B cell (primary cell): ENCODE measurements at regions of chr4 and their contacts with region 1.

Region 1: GRCh38 chr4:169010125-169011023 is at the start of gene CBR4:
- DNase-seq: peak; percentile 99
- ATAC-seq: peak; percentile 96
- H3K4me3 ChIP-seq: peak within 1 kb of the TSS; percentile 94 to 100 (median 99)
- H3K4me3 Mint-ChIP-seq: peak within 1 kb of the TSS; percentile 91
- H3K27ac ChIP-seq: peak within 1 kb of the TSS; percentile 89 to 92
- H3K27ac Mint-ChIP-seq: peak within 1 kb of the TSS; percentile 99
- H3K4me1 ChIP-seq: peaks cover 16 to 18% of the 10 kb centered on the region in 2 donors
- H3K4me1 Mint-ChIP-seq: peaks cover 26% of the 10 kb centered on the region
- H3K27me3 ChIP-seq: no peaks in the 10 kb centered on the region
- H3K27me3 Mint-ChIP-seq: peaks cover 4% of the 10 kb centered on the region
- CTCF ChIP-seq: peak; percentile 41
- total RNA-seq, gene CBR4: 32.1 and 39.0 TPM in 2 replicates

Region 2: DNA sequence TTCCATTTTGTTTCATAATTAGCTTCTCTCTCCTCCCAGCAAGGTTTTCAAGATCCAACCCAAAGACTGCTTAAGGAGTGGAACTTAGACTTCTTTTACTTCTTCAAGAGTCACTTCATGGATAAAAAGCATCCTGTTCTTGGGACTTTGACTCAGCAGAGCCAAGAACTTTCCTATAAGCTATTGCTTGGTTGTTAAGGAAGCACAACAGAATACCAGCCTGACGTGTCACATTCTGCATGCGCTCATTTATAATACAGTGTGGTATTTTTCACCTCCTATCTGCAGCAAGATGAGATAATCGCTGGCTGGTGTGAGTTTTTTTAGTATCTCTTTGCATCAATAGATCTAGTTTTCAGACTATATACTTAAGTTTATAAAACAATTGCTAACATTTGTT is 361.4 kb before region 1 on chr4:
- CTCF ChIA-PET with region 1: no interaction called
- POLR2A ChIA-PET with region 1: no interaction called
- intact Hi-C with region 1: no loop called
- DNase-seq: no peak
- ATAC-seq: no peak
- H3K4me3 ChIP-seq: no peak overlapping the region
- H3K4me3 Mint-ChIP-seq: no peak overlapping the region
- H3K27ac ChIP-seq: no peak overlapping the region
- H3K27ac Mint-ChIP-seq: no peak overlapping the region
- H3K4me1 ChIP-seq: no peaks in the 10 kb centered on the region
- H3K4me1 Mint-ChIP-seq: no peaks in the 10 kb centered on the region
- H3K27me3 ChIP-seq: peaks cover 0 to 5% (median 0%) of the 10 kb centered on the region in 4 experiments
- H3K27me3 Mint-ChIP-seq: no peaks in the 10 kb centered on the region
- CTCF ChIP-seq: no peak

Region 3: GRCh38 chr4:168923526-168924194 is 86.7 kb before region 1 on chr4:
- CTCF ChIA-PET with region 1: interaction called, 3 read pairs
- POLR2A ChIA-PET with region 1: no interaction called
- intact Hi-C with region 1: loop called (anchors 1 kb)
- DNase-seq: peak; percentile 71
- ATAC-seq: peak; percentile 51
- H3K4me3 ChIP-seq: no peak overlapping the region
- H3K4me3 Mint-ChIP-seq: no peak overlapping the region
- H3K27ac ChIP-seq: no peak overlapping the region
- H3K27ac Mint-ChIP-seq: no peak overlapping the region
- H3K4me1 ChIP-seq: no peaks in the 10 kb centered on the region
- H3K4me1 Mint-ChIP-seq: no peaks in the 10 kb centered on the region
- H3K27me3 ChIP-seq: no peaks in the 10 kb centered on the region
- H3K27me3 Mint-ChIP-seq: no peaks in the 10 kb centered on the region
- CTCF ChIP-seq: peak; percentile 90

Region 4: DNA sequence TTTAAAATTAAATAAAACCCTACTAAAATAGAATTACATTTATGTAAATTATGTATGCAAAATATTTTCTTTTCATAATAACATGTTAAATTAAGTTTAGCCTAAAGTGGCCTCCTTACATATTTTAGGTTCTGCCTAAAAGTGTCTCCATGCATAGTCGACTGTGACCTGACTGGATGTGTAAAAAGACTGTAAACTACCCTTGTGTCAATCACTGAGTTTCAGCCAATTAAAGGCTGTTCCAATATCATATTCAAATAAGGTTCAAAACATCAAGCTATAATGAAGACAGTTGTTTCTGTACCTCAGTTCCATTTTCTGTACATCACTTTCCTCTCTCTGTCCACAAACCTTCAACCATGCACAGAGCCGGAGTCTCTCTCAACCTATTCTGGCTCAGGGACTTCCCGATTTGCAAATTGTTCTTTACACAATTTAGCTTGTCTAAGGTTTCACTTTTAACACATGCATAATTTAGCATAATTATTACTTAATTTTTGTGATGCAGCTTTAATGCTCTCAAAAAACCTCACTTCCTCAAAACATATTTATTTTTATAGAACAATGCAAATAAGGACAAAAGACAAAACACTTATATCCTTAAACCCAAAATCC is 200.2 kb after region 1 on chr4:
- CTCF ChIA-PET with region 1: interaction called, 4 read pairs
- POLR2A ChIA-PET with region 1: interaction called, 5 read pairs
- intact Hi-C with region 1: loop called (anchors 5 kb)
- DNase-seq: peak; percentile 81
- ATAC-seq: peak; percentile 85
- H3K4me3 ChIP-seq: peak overlapping the region in 2 of 5 experiments; percentile 18 to 36
- H3K4me3 Mint-ChIP-seq: peak overlapping the region; percentile 83
- H3K27ac ChIP-seq: peak overlapping the region; percentile 74 to 76
- H3K27ac Mint-ChIP-seq: peak overlapping the region; percentile 92
- H3K4me1 ChIP-seq: peaks cover 24 to 29% of the 10 kb centered on the region in 2 donors
- H3K4me1 Mint-ChIP-seq: peaks cover 43% of the 10 kb centered on the region
- H3K27me3 ChIP-seq: no peaks in the 10 kb centered on the region
- H3K27me3 Mint-ChIP-seq: no peaks in the 10 kb centered on the region
- CTCF ChIP-seq: no peak

Region 5: DNA sequence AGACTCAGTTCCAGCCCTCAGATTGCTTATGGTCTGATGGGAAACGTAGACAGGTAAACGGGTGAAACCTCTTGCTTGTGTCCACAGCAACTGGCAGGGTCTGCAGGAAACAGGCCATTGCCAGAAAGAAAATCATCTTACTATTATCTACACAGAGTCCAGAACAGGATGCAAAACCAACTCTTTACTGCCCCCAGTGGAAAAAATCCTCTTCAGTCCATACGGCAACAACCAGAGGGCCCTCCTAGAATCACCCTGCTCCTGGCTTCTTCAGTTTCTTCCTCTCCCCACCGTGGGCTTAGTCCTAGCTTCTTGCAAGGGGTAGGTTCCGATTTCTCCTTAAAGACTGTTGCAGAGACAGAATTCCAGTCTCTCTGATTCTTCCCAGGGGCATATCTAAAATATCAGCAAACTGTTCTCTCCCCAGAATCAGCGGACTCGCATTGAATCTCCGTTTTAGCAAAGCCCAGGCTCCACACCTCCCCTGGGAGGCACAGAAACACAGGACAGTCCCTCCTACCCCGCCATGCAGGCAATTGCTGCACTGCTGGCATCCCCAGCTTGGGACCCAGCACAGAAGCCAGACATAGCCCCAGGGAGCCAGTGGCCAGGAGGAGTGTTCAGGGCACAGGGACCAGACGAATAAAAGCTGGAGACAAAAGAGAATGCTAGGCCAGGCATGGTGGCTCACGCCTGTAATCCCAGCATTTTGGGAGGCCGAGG is 301.4 kb after region 1 on chr4:
- CTCF ChIA-PET with region 1: interaction called, 3 read pairs
- POLR2A ChIA-PET with region 1: no interaction called
- intact Hi-C with region 1: loop called (anchors 5 kb)
- DNase-seq: peak; percentile 56
- ATAC-seq: no peak
- H3K4me3 ChIP-seq: no peak overlapping the region
- H3K4me3 Mint-ChIP-seq: no peak overlapping the region
- H3K27ac ChIP-seq: no peak overlapping the region
- H3K27ac Mint-ChIP-seq: no peak overlapping the region
- H3K4me1 ChIP-seq: no peaks in the 10 kb centered on the region
- H3K4me1 Mint-ChIP-seq: no peaks in the 10 kb centered on the region
- H3K27me3 ChIP-seq: no peaks in the 10 kb centered on the region
- H3K27me3 Mint-ChIP-seq: peaks cover 10% of the 10 kb centered on the region
- CTCF ChIP-seq: peak; percentile 56

Region 6: DNA sequence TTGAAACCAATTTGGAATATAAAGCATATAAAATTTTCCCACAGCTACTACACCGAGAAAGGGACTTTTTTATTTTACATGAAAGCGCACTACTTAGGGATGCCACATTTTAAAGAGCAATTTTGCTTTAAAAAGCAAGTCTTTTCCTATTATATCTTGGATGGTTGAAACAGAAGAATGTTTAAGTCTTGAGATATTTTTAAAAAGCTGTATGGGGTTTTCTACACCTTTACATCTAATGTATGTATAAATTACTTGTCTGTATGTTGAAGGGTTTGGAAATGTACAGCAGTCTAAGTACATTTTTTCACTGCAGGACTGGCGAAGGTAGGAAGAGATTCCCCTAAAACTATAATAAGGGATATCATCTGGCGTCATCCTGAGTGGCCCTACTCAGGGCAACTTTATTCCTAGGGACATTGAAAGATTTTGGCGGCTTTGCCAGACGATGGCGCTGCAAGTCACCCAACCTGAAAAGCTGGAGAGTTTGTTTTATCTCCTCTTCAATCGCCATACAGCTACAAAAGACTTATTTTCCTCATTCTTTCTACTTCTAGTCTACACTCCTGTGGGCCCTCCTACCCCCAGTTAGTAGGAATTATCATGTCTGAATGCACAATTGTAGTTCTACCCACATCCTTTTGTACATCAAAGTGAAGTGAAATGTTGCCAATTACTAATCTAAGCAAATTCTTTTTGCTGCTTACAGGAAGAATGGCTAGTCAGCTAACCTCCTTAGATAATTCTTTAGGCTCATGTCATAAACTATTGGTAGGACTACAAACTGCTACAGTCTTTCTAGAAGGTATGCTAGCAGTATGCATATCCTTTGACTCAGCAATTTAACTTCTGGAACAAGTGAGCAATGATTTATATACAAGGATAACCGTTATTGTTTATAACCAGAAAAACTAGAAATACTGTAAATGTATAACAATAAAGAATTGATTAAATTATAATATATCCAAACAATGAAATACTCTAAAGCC is 602.8 kb after region 1 on chr4:
- CTCF ChIA-PET with region 1: interaction called, 3 read pairs
- POLR2A ChIA-PET with region 1: no interaction called
- intact Hi-C with region 1: loop called (anchors 1 kb)
- DNase-seq: peak; percentile 82
- ATAC-seq: peak; percentile 26
- H3K4me3 ChIP-seq: peak overlapping the region; percentile 85 to 95 (median 90)
- H3K4me3 Mint-ChIP-seq: peak overlapping the region; percentile 98
- H3K27ac ChIP-seq: peak overlapping the region; percentile 98 to 99
- H3K27ac Mint-ChIP-seq: peak overlapping the region; percentile 99
- H3K4me1 ChIP-seq: peaks cover 6 to 12% of the 10 kb centered on the region in 2 donors
- H3K4me1 Mint-ChIP-seq: peaks cover 22% of the 10 kb centered on the region
- H3K27me3 ChIP-seq: no peaks in the 10 kb centered on the region
- H3K27me3 Mint-ChIP-seq: no peaks in the 10 kb centered on the region
- CTCF ChIP-seq: peak; percentile 87

Region 7: GRCh38 chr4:169757575-169758184 is 747.3 kb after region 1 on chr4 and contains the start of gene HPF1:
- CTCF ChIA-PET with region 1: no interaction called
- POLR2A ChIA-PET with region 1: no interaction called
- intact Hi-C with region 1: loop called (anchors 5 kb)
- DNase-seq: peak; percentile 94
- ATAC-seq: peak; percentile 99
- H3K4me3 ChIP-seq: peak within 1 kb of the TSS; percentile 50 to 91 (median 86)
- H3K4me3 Mint-ChIP-seq: peak within 1 kb of the TSS; percentile 96
- H3K27ac ChIP-seq: peak within 1 kb of the TSS; percentile 1 to 50
- H3K27ac Mint-ChIP-seq: peak within 1 kb of the TSS; percentile 79
- H3K4me1 ChIP-seq: peaks cover 14 to 20% of the 10 kb centered on the region in 2 donors
- H3K4me1 Mint-ChIP-seq: peaks cover 21% of the 10 kb centered on the region
- H3K27me3 ChIP-seq: no peaks in the 10 kb centered on the region
- H3K27me3 Mint-ChIP-seq: no peaks in the 10 kb centered on the region
- CTCF ChIP-seq: no peak
- total RNA-seq, gene HPF1: 9.9 and 15.2 TPM in 2 replicates